Left ventricle myocardium inferior (tissue), 1 donor: ENCODE measurements at regions of chr4 and their contacts with region 1.

Region 1: GRCh38 chr4:110049951-110050925 is 137.6 kb downstream of the EGF start:
- DNase-seq: no peak
- H3K4me3 ChIP-seq: no peak overlapping the region
- H3K27ac ChIP-seq: no peak overlapping the region
- H3K4me1 ChIP-seq: no peaks in the 10 kb centered on the region
- H3K27me3 ChIP-seq: peaks cover 3% of the 10 kb centered on the region
- CTCF ChIP-seq: peak; percentile 86

Region 2: GRCh38 chr4:109749388-109750082 is 300.7 kb before region 1 on chr4:
- intact Hi-C with region 1: no loop called
- DNase-seq: no peak
- H3K4me3 ChIP-seq: no peak overlapping the region
- H3K27ac ChIP-seq: no peak overlapping the region
- H3K4me1 ChIP-seq: no peaks in the 10 kb centered on the region
- H3K27me3 ChIP-seq: no peaks in the 10 kb centered on the region
- CTCF ChIP-seq: no peak

Region 3: GRCh38 chr4:109803924-109804571 is 246.2 kb before region 1 on chr4:
- intact Hi-C with region 1: no loop called
- DNase-seq: no peak
- H3K4me3 ChIP-seq: no peak overlapping the region
- H3K27ac ChIP-seq: no peak overlapping the region
- H3K4me1 ChIP-seq: peaks cover 5% of the 10 kb centered on the region
- H3K27me3 ChIP-seq: no peaks in the 10 kb centered on the region
- CTCF ChIP-seq: peak; percentile 56

Region 4: GRCh38 chr4:110196206-110196870 is 146.1 kb after region 1 on chr4:
- intact Hi-C with region 1: loop called (anchors 5 kb)
- DNase-seq: peak; percentile 51
- H3K4me3 ChIP-seq: peak overlapping the region; percentile 78
- H3K27ac ChIP-seq: peak overlapping the region; percentile 76
- H3K4me1 ChIP-seq: peaks cover 37% of the 10 kb centered on the region
- H3K27me3 ChIP-seq: peaks cover 4% of the 10 kb centered on the region
- CTCF ChIP-seq: no peak

Region 5: GRCh38 chr4:110216129-110216528 is 165.9 kb after region 1 on chr4:
- intact Hi-C with region 1: loop called (anchors 5 kb)
- DNase-seq: no peak
- H3K4me3 ChIP-seq: no peak overlapping the region
- H3K27ac ChIP-seq: no peak overlapping the region
- H3K4me1 ChIP-seq: no peaks in the 10 kb centered on the region
- H3K27me3 ChIP-seq: peaks cover 19% of the 10 kb centered on the region
- CTCF ChIP-seq: no peak

Region 6: DNA sequence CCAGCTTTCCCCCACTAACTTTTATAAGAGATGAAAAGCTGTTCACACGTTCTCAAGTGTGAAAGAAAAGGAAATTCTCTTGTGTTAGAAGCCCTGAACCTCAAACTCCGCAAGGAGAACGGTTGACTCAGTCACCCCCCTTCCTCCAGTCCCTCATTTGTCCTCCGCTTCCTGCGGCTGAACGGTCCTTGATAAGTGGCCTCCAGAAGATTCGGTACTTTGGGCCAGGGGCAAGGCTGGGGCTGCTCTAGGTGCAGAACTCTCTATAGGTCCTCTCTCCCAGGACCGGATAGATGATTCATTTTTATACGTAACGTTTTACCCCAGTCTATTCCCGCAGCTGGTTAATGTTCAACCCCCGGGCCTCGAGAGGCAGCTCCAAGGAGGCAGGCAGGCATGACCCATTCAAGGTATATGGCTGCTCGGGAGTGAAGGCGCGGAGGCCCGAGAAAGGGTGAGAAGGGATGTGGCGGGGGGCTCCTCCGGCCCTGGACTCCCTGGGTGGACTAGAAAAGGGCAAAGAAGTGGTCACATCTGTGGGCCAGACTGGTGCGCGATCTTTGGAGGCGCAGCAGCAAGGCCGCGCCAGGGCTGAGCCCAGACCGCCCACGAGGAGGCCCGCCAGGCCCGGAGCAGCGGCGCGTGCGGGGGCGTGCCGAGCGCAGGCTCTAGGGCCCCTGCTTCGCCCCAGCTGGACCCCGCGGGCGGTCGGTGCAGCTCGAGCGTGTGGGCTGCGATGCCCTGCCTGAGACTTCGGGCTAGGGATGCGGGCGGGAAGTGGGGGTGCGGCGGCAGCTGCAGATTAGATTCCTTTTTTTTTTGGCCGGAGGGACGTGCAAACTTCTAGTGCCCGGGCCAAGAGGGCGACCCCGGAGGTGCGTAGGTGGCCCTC is 560.9 kb after region 1 on chr4:
- intact Hi-C with region 1: no loop called
- DNase-seq: no peak
- H3K4me3 ChIP-seq: peak overlapping the region; percentile 40
- H3K27ac ChIP-seq: no peak overlapping the region
- H3K4me1 ChIP-seq: peaks cover 8% of the 10 kb centered on the region
- H3K27me3 ChIP-seq: peaks cover 94% of the 10 kb centered on the region
- CTCF ChIP-seq: no peak